AG04449 (cell line): ENCODE measurements at regions of chr17 and their contacts with region 1.

Region 1: DNA sequence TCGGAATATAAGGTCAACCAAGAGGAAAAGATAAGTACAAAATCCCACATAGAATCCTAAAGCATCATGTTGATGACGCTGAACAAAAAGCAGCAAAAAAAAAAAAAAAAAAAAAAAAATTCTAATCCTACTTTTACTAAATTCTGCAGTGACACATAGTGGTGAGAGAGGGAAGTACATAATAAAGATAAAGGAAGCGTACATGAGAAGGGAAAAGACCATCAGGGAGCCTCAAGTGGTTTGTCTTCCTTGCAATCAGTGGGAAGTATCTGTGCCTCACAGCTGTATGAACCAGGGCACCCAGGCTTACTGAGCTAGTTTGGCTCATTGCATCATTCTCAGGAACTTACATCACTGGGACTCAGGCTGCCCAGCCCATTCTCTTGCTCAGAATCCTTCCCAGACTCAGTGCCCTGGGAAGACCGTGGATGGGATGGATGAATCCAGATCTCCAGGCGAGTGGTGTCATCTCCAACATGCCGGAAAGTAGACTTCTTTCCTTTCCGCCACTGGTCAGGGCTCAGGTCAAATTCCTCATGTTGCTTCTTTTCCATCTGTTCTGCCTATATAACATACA is 21.2 kb downstream of the SMG6 start:
- DNase-seq: peak; percentile 55
- H3K4me3 ChIP-seq: no peak overlapping the region
- CTCF ChIP-seq: peak; percentile 33

Region 2: DNA sequence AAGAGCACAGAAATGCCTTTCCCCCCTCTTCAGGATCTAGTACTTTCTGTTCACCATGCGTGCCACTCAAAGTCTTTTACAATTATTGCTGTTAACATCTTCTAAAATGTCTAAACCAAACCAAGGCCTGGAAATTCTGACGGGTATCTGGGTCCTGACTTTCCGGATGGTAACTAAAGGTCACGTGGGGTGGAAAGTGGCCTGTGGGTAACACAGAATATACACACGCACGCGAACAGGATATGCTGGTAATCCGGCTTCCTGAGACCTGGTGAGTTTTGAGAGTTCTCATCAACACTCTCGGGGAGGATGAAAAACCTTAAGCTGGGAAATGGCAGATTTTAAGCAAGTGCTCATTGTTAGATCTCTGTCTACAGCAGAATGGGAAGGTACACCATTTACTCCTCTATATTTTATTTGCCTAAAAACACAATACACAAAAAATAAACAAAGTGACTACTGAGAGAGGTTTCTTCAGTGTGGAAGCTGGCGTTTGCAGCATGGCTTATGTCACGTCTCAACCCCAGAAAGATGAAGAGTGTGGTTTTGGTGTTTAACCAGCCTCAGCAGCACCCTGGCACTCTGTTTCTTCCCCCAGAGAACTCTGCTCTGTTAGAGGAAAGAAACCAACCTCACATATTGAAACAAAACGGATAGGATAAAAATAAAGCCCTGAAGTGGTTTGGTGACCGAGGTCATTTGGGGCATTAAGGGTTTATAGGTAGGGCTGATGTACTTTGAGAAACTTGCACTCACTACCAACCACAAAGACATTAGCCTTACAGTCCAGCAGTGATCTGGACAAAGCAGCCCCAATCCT is 16.1 kb before region 1 on chr17:
- CTCF ChIA-PET with region 1: interaction called, 34 read pairs
- POLR2A ChIA-PET with region 1: no interaction called
- DNase-seq: no peak
- H3K4me3 ChIP-seq: no peak overlapping the region
- CTCF ChIP-seq: no peak